Activated T-helper 2 cell treated with anti-CD3 and anti-CD28 coated beads, Interferon-gamma antibody, Interleukin-2, Interleukin-4, amounts not matched to agents 10 μg/mL and 5 μg/mL and 100 μg/mL, durations not matched to agents 14 hours and 24 hours and 36 hours (primary cell): ENCODE measurements at regions of chr3 and their contacts with region 1.

Region 1: DNA sequence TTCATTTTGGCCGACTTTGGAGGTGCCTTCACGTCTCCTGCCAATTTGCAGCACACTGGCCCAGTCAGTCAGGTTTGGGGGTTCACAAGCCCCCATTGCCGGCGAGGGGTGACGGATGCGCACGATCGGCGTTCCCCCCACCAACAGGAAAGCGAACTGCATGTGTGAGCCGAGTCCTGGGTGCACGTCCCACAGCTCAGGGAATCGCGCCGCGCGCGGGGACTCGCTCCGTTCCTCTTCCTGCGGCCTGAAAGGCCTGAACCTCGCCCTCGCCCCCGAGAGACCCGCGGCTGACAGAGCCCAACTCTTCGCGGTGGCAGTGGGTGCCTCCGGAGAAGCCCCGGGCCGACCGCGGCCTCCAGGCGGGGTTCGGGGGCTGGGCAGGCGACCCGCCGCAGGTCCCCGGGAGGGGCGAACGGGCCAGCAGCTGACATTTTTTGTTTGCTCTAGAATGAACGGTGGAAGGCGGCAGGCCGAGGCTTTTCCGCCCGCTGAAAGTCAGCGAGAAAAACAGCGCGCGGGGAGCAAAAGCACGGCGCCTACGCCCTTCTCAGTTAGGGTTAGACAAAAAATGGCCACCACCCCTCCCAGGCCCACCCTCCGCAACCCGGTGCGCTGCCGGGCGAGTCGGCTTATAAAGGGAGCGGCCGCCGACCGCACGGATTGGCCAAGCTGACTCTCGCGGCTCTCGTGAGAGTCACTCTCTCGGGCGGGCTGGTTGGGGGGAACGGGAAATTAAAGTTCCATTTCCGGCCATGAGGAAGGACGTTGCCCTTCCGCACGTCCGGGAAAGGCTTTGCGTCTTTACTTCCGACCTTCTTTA is at the start of gene TERC:
- DNase-seq: peak; percentile 88
- H3K4me3 Mint-ChIP-seq: peak within 1 kb of the TSS; percentile 90
- H3K27ac Mint-ChIP-seq: peak within 1 kb of the TSS; percentile 92
- H3K4me1 Mint-ChIP-seq: peaks cover 25% of the 10 kb centered on the region
- H3K27me3 Mint-ChIP-seq: no peaks in the 10 kb centered on the region
- total RNA-seq, gene TERC: 7.0 and 9.8 TPM in 2 replicates

Region 2: GRCh38 chr3:169710619-169711018 is 54.0 kb before region 1 on chr3:
- intact Hi-C with region 1: no loop called
- DNase-seq: no peak
- H3K4me3 Mint-ChIP-seq: no peak overlapping the region
- H3K27ac Mint-ChIP-seq: no peak overlapping the region
- H3K4me1 Mint-ChIP-seq: no peaks in the 10 kb centered on the region
- H3K27me3 Mint-ChIP-seq: peaks cover 3% of the 10 kb centered on the region

Region 3: GRCh38 chr3:169863458-169863899 is 98.8 kb after region 1 on chr3:
- intact Hi-C with region 1: loop called (anchors 5 kb)
- DNase-seq: peak; percentile 60
- H3K4me3 Mint-ChIP-seq: no peak overlapping the region
- H3K27ac Mint-ChIP-seq: no peak overlapping the region
- H3K4me1 Mint-ChIP-seq: peaks cover 11% of the 10 kb centered on the region
- H3K27me3 Mint-ChIP-seq: peaks cover 25% of the 10 kb centered on the region

Region 4: GRCh38 chr3:170037463-170038433 is 273.1 kb after region 1 on chr3 and contains the start of gene GPR160:
- intact Hi-C with region 1: loop called (anchors 5 kb)
- DNase-seq: peak; percentile 75
- H3K4me3 Mint-ChIP-seq: peak within 1 kb of the TSS; percentile 84
- H3K27ac Mint-ChIP-seq: peak within 1 kb of the TSS; percentile 33
- H3K4me1 Mint-ChIP-seq: peaks cover 22% of the 10 kb centered on the region
- H3K27me3 Mint-ChIP-seq: no peaks in the 10 kb centered on the region
- total RNA-seq, gene GPR160: 7.7 and 9.6 TPM in 2 replicates

Region 5: GRCh38 chr3:170180908-170181879 is 416.5 kb after region 1 on chr3 and contains the start of gene PHC3:
- intact Hi-C with region 1: loop called (anchors 2 kb)
- DNase-seq: peak; percentile 90
- H3K4me3 Mint-ChIP-seq: peak within 1 kb of the TSS; percentile 94
- H3K27ac Mint-ChIP-seq: peak within 1 kb of the TSS; percentile 99
- H3K4me1 Mint-ChIP-seq: peaks cover 22% of the 10 kb centered on the region
- H3K27me3 Mint-ChIP-seq: no peaks in the 10 kb centered on the region
- total RNA-seq, gene PHC3: 48.3 and 52.0 TPM in 2 replicates

Region 6: GRCh38 chr3:170858599-170858998 is 1093.9 kb after region 1 on chr3:
- intact Hi-C with region 1: loop called (anchors 5 kb)
- DNase-seq: no peak
- H3K4me3 Mint-ChIP-seq: no peak overlapping the region
- H3K27ac Mint-ChIP-seq: no peak overlapping the region
- H3K4me1 Mint-ChIP-seq: peaks cover 10% of the 10 kb centered on the region
- H3K27me3 Mint-ChIP-seq: no peaks in the 10 kb centered on the region